Heart right ventricle (tissue), 16 donors: ENCODE measurements at regions of chr18 and their contacts with region 1.

Region 1: DNA sequence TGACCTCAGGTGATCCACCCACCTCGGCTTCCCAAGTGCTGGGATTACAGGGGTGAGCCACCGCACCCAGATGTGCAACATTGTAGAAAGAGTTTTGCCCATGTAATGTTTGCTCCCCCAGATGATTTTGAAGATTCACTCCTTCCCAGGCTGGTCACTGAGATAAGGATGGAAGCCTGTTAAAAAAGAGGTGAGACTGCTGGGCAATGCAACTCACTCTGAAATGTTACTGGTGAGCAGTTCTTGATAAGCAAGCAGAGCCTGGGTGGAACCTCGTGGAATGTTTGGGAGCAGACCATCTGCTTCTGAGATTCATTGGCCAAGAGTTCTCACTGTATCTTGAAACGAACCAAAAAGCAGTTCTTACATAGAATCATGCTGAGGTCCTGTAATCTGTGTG is 19.7 kb downstream of the GRP start:
- DNase-seq: no peak
- ATAC-seq: no peak
- H3K4me3 ChIP-seq: no peak overlapping the region
- H3K27ac ChIP-seq: no peak overlapping the region
- H3K4me1 ChIP-seq: no peaks in the 10 kb centered on the region
- H3K27me3 ChIP-seq: peaks cover 0 to 20% (median 10%) of the 10 kb centered on the region in 7 donors
- CTCF ChIP-seq: no peak

Region 2: GRCh38 chr18:58716060-58716756 is 523.4 kb before region 1 on chr18:
- intact Hi-C with region 1: loop called in 1 of 10 experiments (anchors 5 kb)
- DNase-seq: no peak
- ATAC-seq: no peak
- H3K4me3 ChIP-seq: no peak overlapping the region
- H3K27ac ChIP-seq: no peak overlapping the region
- H3K4me1 ChIP-seq: peaks cover 0 to 12% (median 0%) of the 10 kb centered on the region in 9 donors
- H3K27me3 ChIP-seq: no peaks in the 10 kb centered on the region
- CTCF ChIP-seq: no peak

Region 3: GRCh38 chr18:59139371-59140298 is 100.0 kb before region 1 on chr18 and contains the start of gene SEC11C:
- intact Hi-C with region 1: no loop called
- DNase-seq: peak; percentile 95 to 97
- ATAC-seq: peak; percentile 97 to 99 (median 99)
- H3K4me3 ChIP-seq: peak within 1 kb of the TSS; percentile 75 to 94 (median 82)
- H3K27ac ChIP-seq: peak within 1 kb of the TSS; percentile 62 to 93 (median 84)
- H3K4me1 ChIP-seq: peaks cover 0 to 22% (median 12%) of the 10 kb centered on the region in 9 donors
- H3K27me3 ChIP-seq: peaks cover 0 to 18% (median 8%) of the 10 kb centered on the region in 7 donors
- CTCF ChIP-seq: no peak
- total RNA-seq, gene SEC11C: 13.8 to 30.0 (median 21.0) TPM